Aorta (tissue), 5 donors: ENCODE measurements at regions of chr1 and their contacts with region 1.

Region 1: GRCh38 chr1:13828454-13829151 is 128.6 kb downstream of the PRDM2 start:
- DNase-seq: no peak
- ATAC-seq: peak; percentile 41
- H3K4me3 ChIP-seq: no peak overlapping the region
- H3K27ac ChIP-seq: no peak overlapping the region
- H3K4me1 ChIP-seq: no peaks in the 10 kb centered on the region
- H3K27me3 ChIP-seq: no peaks in the 10 kb centered on the region

Region 2: GRCh38 chr1:13960375-13960987 is 131.9 kb after region 1 on chr1:
- intact Hi-C with region 1: loop called in 1 of 2 experiments (anchors 5 kb)
- DNase-seq: peak; percentile 64 to 85
- ATAC-seq: peak; percentile 81
- H3K4me3 ChIP-seq: no peak overlapping the region
- H3K27ac ChIP-seq: no peak overlapping the region
- H3K4me1 ChIP-seq: no peaks in the 10 kb centered on the region
- H3K27me3 ChIP-seq: no peaks in the 10 kb centered on the region